ENCODE measurements at regions of chr15 and their contacts with region 1.

Region 1: GRCh38 chr15:29124581-29125381 is 144.8 kb downstream of the NSMCE3 start:
- DNase-seq: no peak
- ATAC-seq: no peak
- H3K4me3 ChIP-seq: no peak overlapping the region
- H3K27ac ChIP-seq: no peak overlapping the region
- H3K4me1 ChIP-seq: no peaks in the 10 kb centered on the region
- H3K27me3 ChIP-seq: no peaks in the 10 kb centered on the region

Region 2: GRCh38 chr15:29070449-29071231 is 54.1 kb before region 1 on chr15:
- intact Hi-C with region 1: loop called in 1 of 4 experiments (anchors 10 kb)
- DNase-seq: no peak
- ATAC-seq: no peak
- H3K4me3 ChIP-seq: no peak overlapping the region
- H3K27ac ChIP-seq: no peak overlapping the region
- H3K4me1 ChIP-seq: no peaks in the 10 kb centered on the region
- H3K27me3 ChIP-seq: no peaks in the 10 kb centered on the region

Measured in right cardiac atrium (tissue), 5 donors.